HEK293 (cell line): ENCODE measurements at regions of chr6 and their contacts with region 1.

Region 1: GRCh38 chr6:132669690-132670291 is 10.8 kb upstream of the TAAR1 start:
- H3K4me3 ChIP-seq: no peak overlapping the region; the same call in 1 of the 2 replicates
- H3K27ac ChIP-seq: no peak overlapping the region
- H3K4me1 ChIP-seq: no peaks in the 10 kb centered on the region
- CTCF ChIP-seq: 0 out of 2 replicates have a peak, but pooled peaks have one; percentile 17

Region 2: DNA sequence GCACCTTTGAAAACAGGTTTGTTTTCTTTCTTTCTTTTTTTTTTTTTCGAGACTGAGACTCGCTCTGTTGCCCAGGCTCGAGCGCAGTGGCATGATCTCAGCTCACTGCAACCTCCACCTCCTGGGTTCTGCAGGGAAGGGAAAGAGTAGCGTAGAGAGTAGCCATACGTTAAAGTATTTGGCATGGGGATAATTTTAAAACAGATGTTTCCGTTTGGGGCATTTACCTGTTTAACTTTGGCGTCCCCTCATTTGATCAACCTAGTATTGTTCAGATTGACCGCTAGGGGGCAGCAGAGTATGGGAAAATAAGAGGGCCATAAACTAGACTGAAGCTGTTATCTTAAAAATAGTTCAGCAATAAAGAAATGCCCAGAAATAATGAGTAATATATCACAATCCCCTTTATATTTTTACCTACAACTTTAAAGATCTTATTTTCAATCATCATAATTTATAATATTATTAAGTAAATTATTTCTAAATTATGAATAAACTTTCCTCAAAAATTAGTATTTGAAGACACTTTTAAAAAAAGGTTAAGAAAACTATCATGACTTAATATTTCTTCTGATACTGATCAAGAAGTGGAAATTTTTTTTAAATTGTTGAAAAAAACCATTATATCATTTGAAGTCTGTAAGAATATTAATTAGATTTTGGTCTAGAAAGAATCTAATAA is 139.4 kb before region 1 on chr6:
- CTCF ChIA-PET with region 1: interaction called, 11 read pairs
- POLR2A ChIA-PET with region 1: no interaction called
- H3K4me3 ChIP-seq: peak overlapping the region; percentile 25; the same call in 1 of the 2 replicates
- H3K27ac ChIP-seq: no peak overlapping the region
- H3K4me1 ChIP-seq: peaks cover 5% of the 10 kb centered on the region; the same call in 1 of the 2 replicates
- CTCF ChIP-seq: peak; percentile 56

Region 3: DNA sequence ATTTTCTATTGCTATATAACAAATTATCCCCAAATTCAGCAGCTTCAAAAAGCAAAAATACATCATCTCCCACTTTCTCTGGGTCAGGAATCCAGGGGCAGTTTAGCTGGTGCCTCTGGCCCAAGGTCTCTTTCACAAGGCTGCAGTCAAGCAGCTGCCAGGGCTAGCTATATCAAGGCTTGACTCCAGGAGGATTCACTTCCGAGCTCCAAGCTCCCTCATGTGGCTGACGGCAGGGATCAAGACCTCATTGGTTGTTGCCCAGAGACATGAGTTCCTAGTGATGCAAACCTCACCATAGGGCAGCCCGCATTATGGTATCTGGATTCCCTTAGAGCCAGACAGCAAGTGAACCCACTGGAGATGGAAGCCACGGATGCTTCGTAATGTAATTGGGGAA is 45.4 kb after region 1 on chr6:
- CTCF ChIA-PET with region 1: interaction called, 11 read pairs
- POLR2A ChIA-PET with region 1: no interaction called
- H3K4me3 ChIP-seq: no peak overlapping the region
- H3K27ac ChIP-seq: no peak overlapping the region
- H3K4me1 ChIP-seq: no peaks in the 10 kb centered on the region
- CTCF ChIP-seq: peak; percentile 58

Region 4: DNA sequence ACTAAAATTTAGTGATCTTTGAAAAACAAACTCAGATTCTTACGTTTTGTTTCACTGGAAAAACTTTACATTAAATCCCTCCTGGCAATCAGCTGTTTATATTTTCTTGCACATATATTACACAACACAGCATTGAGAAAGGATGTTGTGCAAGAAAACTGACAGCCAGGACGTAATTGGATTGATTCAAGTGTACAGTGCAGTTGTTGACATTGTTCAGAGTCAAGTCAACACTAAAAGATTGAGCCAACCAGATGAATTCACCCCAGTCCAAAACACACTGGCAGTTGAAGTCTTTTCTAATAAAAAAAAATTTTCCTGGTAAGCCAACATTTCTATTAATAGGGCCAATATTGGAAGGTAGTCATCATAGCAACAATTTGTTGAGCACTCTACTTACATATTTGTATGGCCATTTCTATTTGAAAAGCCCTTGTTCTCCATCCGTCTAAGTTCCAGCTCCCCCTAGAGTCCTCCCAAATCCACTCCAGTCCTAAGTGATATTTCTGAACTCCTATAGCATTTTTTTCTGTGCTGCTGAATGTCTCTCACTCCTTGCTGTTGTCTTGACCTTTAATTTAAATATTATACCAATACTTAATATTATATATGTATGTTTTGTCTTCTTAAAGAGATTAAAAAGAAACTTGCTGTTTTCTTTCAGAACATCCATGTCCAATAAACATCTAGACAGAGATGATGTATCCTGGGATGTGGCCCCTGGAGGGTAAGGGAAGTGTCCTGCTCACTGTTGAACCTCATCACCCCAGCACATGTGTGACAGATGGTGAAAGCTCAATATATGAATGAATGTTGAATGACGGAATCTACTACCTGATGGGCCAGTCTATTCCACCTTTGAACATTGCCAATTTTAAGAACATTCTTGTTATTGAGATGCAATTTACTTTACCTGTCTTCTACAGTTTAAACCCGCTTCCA is 65.2 kb after region 1 on chr6:
- CTCF ChIA-PET with region 1: interaction called, 19 read pairs
- POLR2A ChIA-PET with region 1: no interaction called
- H3K4me3 ChIP-seq: no peak overlapping the region
- H3K27ac ChIP-seq: no peak overlapping the region
- H3K4me1 ChIP-seq: no peaks in the 10 kb centered on the region
- CTCF ChIP-seq: no peak

Region 5: GRCh38 chr6:132768051-132768517 is 98.3 kb after region 1 on chr6:
- CTCF ChIA-PET with region 1: interaction called, 62 read pairs
- POLR2A ChIA-PET with region 1: no interaction called
- H3K4me3 ChIP-seq: no peak overlapping the region
- H3K27ac ChIP-seq: no peak overlapping the region
- H3K4me1 ChIP-seq: no peaks in the 10 kb centered on the region
- CTCF ChIP-seq: peak; percentile 38; the same call in 1 of the 2 replicates

Region 6: GRCh38 chr6:132798869-132799538 is 129.2 kb after region 1 on chr6:
- CTCF ChIA-PET with region 1: interaction called, 18 read pairs
- POLR2A ChIA-PET with region 1: interaction called, 5 read pairs
- H3K4me3 ChIP-seq: peak overlapping the region; percentile 84
- H3K27ac ChIP-seq: peak overlapping the region; percentile 67; the same call in 1 of the 2 replicates
- H3K4me1 ChIP-seq: 0 out of 2 replicates have a peak, but pooled peaks cover 2% of the 10 kb centered on the region
- CTCF ChIP-seq: peak; percentile 74